ENCODE measurements at regions of chr12 and their contacts with region 1.

Region 1: GRCh38 chr12:57904848-57905811 is 36.2 kb upstream of the ATP23 start:
- DNase-seq: peak; percentile 71 to 86 (median 74)
- H3K4me3 ChIP-seq: no peak overlapping the region
- H3K4me3 Mint-ChIP-seq: peak overlapping the region in 2 of 7 donors; percentile 61 to 71
- H3K27ac ChIP-seq: no peak overlapping the region
- H3K27ac Mint-ChIP-seq: peak overlapping the region in 6 of 8 donors; percentile 1 to 86 (median 26)
- H3K4me1 ChIP-seq: peaks cover 9% of the 10 kb centered on the region
- H3K4me1 Mint-ChIP-seq: peaks cover 5 to 11% (median 10%) of the 10 kb centered on the region in 3 donors
- H3K27me3 ChIP-seq: no peaks in the 10 kb centered on the region
- H3K27me3 Mint-ChIP-seq: peaks cover 19 to 35% of the 10 kb centered on the region in 2 donors

Region 2: GRCh38 chr12:57754411-57755193 is 150.5 kb before region 1 on chr12 and contains the start of gene MARCHF9:
- CTCF ChIA-PET with region 1: interaction called, 30 read pairs
- POLR2A ChIA-PET with region 1: no interaction called
- DNase-seq: peak; percentile 76 to 92 (median 81)
- H3K4me3 ChIP-seq: peak within 1 kb of the TSS; percentile 65
- H3K4me3 Mint-ChIP-seq: peak within 1 kb of the TSS; percentile 88 to 97 (median 94)
- H3K27ac ChIP-seq: peak within 1 kb of the TSS; percentile 69
- H3K27ac Mint-ChIP-seq: peak within 1 kb of the TSS; percentile 93 to 100 (median 97)
- H3K4me1 ChIP-seq: peaks cover 50% of the 10 kb centered on the region
- H3K4me1 Mint-ChIP-seq: peaks cover 55 to 71% (median 65%) of the 10 kb centered on the region in 3 donors
- H3K27me3 ChIP-seq: no peaks in the 10 kb centered on the region
- H3K27me3 Mint-ChIP-seq: peaks cover 0 to 2% of the 10 kb centered on the region in 2 donors
- total RNA-seq, gene MARCHF9: 26.3 to 27.2 TPM

Region 3: GRCh38 chr12:57782608-57783465 is 122.3 kb before region 1 on chr12 and contains the start of gene TSFM:
- CTCF ChIA-PET with region 1: interaction called, 13 read pairs
- POLR2A ChIA-PET with region 1: no interaction called
- DNase-seq: peak; percentile 91 to 98 (median 94)
- H3K4me3 ChIP-seq: peak within 1 kb of the TSS; percentile 99
- H3K4me3 Mint-ChIP-seq: peak within 1 kb of the TSS; percentile 99 to 100 (median 100)
- H3K27ac ChIP-seq: peak within 1 kb of the TSS; percentile 95
- H3K27ac Mint-ChIP-seq: peak within 1 kb of the TSS; percentile 98 to 100 (median 99)
- H3K4me1 ChIP-seq: peaks cover 40% of the 10 kb centered on the region
- H3K4me1 Mint-ChIP-seq: peaks cover 45 to 55% (median 51%) of the 10 kb centered on the region in 3 donors
- H3K27me3 ChIP-seq: no peaks in the 10 kb centered on the region
- H3K27me3 Mint-ChIP-seq: peaks cover 0 to 3% of the 10 kb centered on the region in 2 donors
- total RNA-seq, gene TSFM: 64.0 to 69.0 TPM

Region 4: GRCh38 chr12:57803319-57803893 is 101.7 kb before region 1 on chr12:
- CTCF ChIA-PET with region 1: interaction called, 21 read pairs
- POLR2A ChIA-PET with region 1: no interaction called
- DNase-seq: peak in 1 of 5 donors; percentile 33
- H3K4me3 ChIP-seq: no peak overlapping the region
- H3K4me3 Mint-ChIP-seq: no peak overlapping the region
- H3K27ac ChIP-seq: no peak overlapping the region
- H3K27ac Mint-ChIP-seq: peak overlapping the region in 1 of 8 donors; percentile 66
- H3K4me1 ChIP-seq: no peaks in the 10 kb centered on the region
- H3K4me1 Mint-ChIP-seq: peaks cover 0 to 2% (median 0%) of the 10 kb centered on the region in 3 donors
- H3K27me3 ChIP-seq: no peaks in the 10 kb centered on the region
- H3K27me3 Mint-ChIP-seq: no peaks in the 10 kb centered on the region

Region 5: DNA sequence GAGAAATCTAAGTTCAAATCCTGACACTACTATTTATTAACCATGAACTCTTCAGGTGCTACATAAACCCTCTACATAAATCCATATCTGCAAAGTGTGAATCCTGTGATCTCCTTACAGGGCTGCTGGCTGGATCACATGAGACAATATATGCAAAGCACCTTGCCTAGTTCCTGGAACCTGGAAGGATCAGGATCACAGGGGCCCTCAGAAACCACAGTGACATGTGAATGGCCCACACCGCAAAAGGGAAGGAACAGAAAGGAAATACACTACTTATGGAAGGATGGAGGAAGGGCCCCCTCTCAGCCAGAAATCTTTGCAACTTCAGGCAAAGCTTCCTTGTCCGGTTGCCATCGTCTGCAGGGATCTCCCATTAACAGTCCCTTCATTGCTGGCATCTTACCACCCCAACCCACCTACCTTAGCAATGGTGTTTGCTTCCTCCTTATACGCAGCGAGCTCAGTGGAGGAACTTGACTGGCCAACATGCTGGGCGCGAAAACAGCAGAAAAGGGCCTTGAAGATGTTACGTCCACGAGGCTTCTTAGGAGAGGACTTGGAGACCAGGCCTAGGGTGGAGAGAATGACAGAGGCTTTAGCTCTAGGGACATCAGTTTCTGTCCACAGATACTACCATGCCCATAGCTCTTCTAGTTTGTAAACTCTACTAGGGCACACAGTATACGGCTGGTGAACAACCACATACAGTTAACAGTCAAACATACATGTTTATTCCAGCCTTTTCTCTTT is 75.9 kb before region 1 on chr12:
- CTCF ChIA-PET with region 1: interaction called, 78 read pairs
- POLR2A ChIA-PET with region 1: no interaction called
- DNase-seq: no peak
- H3K4me3 ChIP-seq: no peak overlapping the region
- H3K4me3 Mint-ChIP-seq: peak overlapping the region in 1 of 7 donors; percentile 44
- H3K27ac ChIP-seq: no peak overlapping the region
- H3K27ac Mint-ChIP-seq: peak overlapping the region in 3 of 8 donors; percentile 49 to 72 (median 71)
- H3K4me1 ChIP-seq: peaks cover 48% of the 10 kb centered on the region
- H3K4me1 Mint-ChIP-seq: peaks cover 36 to 53% (median 44%) of the 10 kb centered on the region in 3 donors
- H3K27me3 ChIP-seq: no peaks in the 10 kb centered on the region
- H3K27me3 Mint-ChIP-seq: peaks cover 0 to 2% of the 10 kb centered on the region in 2 donors

Region 6: GRCh38 chr12:57836442-57837375 is 68.4 kb before region 1 on chr12:
- CTCF ChIA-PET with region 1: interaction called, 78 read pairs
- POLR2A ChIA-PET with region 1: no interaction called
- DNase-seq: peak in 3 of 5 donors; percentile 30 to 43 (median 39)
- H3K4me3 ChIP-seq: peak overlapping the region; percentile 42
- H3K4me3 Mint-ChIP-seq: peak overlapping the region; percentile 27 to 86 (median 70)
- H3K27ac ChIP-seq: peak overlapping the region; percentile 3
- H3K27ac Mint-ChIP-seq: peak overlapping the region; percentile 87 to 98 (median 91)
- H3K4me1 ChIP-seq: peaks cover 98% of the 10 kb centered on the region
- H3K4me1 Mint-ChIP-seq: peaks cover 89 to 96% (median 92%) of the 10 kb centered on the region in 3 donors
- H3K27me3 ChIP-seq: no peaks in the 10 kb centered on the region
- H3K27me3 Mint-ChIP-seq: no peaks in the 10 kb centered on the region

Region 7: GRCh38 chr12:57846577-57847319 is 58.4 kb before region 1 on chr12 and contains the start of gene CTDSP2:
- CTCF ChIA-PET with region 1: interaction called, 31 read pairs
- POLR2A ChIA-PET with region 1: no interaction called
- DNase-seq: peak; percentile 79 to 91 (median 85)
- H3K4me3 ChIP-seq: peak within 1 kb of the TSS; percentile 87
- H3K4me3 Mint-ChIP-seq: peak within 1 kb of the TSS; percentile 84 to 100 (median 89)
- H3K27ac ChIP-seq: peak within 1 kb of the TSS; percentile 88
- H3K27ac Mint-ChIP-seq: peak within 1 kb of the TSS; percentile 78 to 94 (median 87)
- H3K4me1 ChIP-seq: peaks cover 29% of the 10 kb centered on the region
- H3K4me1 Mint-ChIP-seq: peaks cover 37 to 58% (median 41%) of the 10 kb centered on the region in 3 donors
- H3K27me3 ChIP-seq: no peaks in the 10 kb centered on the region
- H3K27me3 Mint-ChIP-seq: peaks cover 4 to 6% of the 10 kb centered on the region in 2 donors
- total RNA-seq, gene CTDSP2: 72.8 to 76.4 TPM